Activated CD8-positive, alpha-beta T cell treated with anti-CD3 and anti-CD28 coated beads, Interleukin-2, amount 10 ng/mL, durations not matched to agents 7 days and 5 days (primary cell): ENCODE measurements at regions of chr13 and their contacts with region 1.

Region 1: GRCh38 chr13:94620286-94620896 is 18.7 kb downstream of the GPR180 start:
- DNase-seq: peak; percentile 38
- ATAC-seq: peak; percentile 63
- H3K4me3 Mint-ChIP-seq: no peak overlapping the region
- H3K27ac Mint-ChIP-seq: no peak overlapping the region
- H3K4me1 Mint-ChIP-seq: peaks cover 9% of the 10 kb centered on the region
- H3K27me3 Mint-ChIP-seq: no peaks in the 10 kb centered on the region

Region 2: GRCh38 chr13:94416454-94417080 is 203.8 kb before region 1 on chr13:
- CTCF ChIA-PET with region 1: interaction called, 10 read pairs
- POLR2A ChIA-PET with region 1: no interaction called
- DNase-seq: no peak
- ATAC-seq: no peak
- H3K4me3 Mint-ChIP-seq: no peak overlapping the region
- H3K27ac Mint-ChIP-seq: no peak overlapping the region
- H3K4me1 Mint-ChIP-seq: peaks cover 19% of the 10 kb centered on the region
- H3K27me3 Mint-ChIP-seq: no peaks in the 10 kb centered on the region

Region 3: GRCh38 chr13:94549232-94550061 is 70.9 kb before region 1 on chr13:
- CTCF ChIA-PET with region 1: interaction called, 32 read pairs
- POLR2A ChIA-PET with region 1: interaction called, 3 read pairs
- DNase-seq: peak; percentile 94
- ATAC-seq: peak; percentile 95
- H3K4me3 Mint-ChIP-seq: peak overlapping the region; percentile 86
- H3K27ac Mint-ChIP-seq: peak overlapping the region; percentile 96
- H3K4me1 Mint-ChIP-seq: peaks cover 20% of the 10 kb centered on the region
- H3K27me3 Mint-ChIP-seq: peaks cover 8% of the 10 kb centered on the region

Region 4: DNA sequence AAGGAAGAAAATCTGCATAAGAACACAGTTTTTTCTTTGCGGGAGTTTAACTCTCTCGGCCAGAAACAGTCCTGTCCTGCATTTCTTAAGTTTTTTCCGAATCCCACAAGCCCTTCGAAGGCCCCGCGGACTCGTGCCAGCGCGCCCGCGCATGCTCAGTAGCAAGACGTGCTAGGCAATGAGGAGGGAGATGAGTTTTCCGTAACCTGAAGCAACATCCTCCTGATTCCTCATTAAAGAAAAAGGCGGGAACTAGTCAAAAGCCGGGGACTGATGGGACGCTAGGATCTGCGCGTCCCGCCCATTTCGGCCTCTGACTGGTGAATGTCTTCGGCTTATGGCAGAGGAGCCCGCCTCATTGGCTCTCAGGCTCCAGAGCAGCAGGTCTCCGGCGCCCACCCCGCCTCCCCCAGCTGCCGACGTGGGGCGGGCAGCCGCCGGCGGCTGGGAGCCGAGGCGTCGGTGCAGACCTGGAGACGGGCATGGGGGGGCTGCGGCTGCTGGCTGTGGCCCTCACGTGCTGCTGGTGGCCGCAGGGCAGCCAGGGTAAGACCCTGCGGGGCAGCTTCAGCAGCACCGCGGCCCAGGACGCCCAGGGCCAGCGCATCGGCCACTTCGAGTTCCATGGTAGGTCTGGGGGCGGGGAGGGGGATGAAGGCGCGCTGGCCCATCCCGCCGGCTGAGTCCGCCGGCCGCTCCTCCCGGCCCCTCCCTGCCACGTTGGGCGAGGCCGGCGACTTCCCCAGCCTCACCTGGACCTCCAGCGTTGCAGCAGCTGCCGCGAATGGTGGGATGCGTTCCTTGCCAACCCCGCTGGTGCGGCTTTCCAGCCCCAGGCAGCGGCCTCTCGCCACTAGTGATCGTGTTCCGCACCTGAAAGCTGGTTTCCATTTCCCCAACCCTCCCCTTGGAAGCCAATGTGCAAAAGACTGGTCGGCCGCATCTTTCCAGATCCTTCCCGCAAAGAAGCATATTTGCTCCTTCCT is 18.7 kb before region 1 on chr13 and contains the start of gene GPR180:
- CTCF ChIA-PET with region 1: interaction called, 32 read pairs
- POLR2A ChIA-PET with region 1: interaction called, 5 read pairs
- DNase-seq: peak; percentile 96
- ATAC-seq: peak; percentile 100
- H3K4me3 Mint-ChIP-seq: peak within 1 kb of the TSS; percentile 87
- H3K27ac Mint-ChIP-seq: peak within 1 kb of the TSS; percentile 83
- H3K4me1 Mint-ChIP-seq: peaks cover 46% of the 10 kb centered on the region
- H3K27me3 Mint-ChIP-seq: no peaks in the 10 kb centered on the region
- total RNA-seq, gene GPR180: 7.7 to 7.9 TPM

Region 5: GRCh38 chr13:94630858-94631257 is 10.5 kb after region 1 on chr13:
- CTCF ChIA-PET with region 1: interaction called, 48 read pairs
- POLR2A ChIA-PET with region 1: no interaction called
- DNase-seq: no peak
- ATAC-seq: no peak
- H3K4me3 Mint-ChIP-seq: no peak overlapping the region
- H3K27ac Mint-ChIP-seq: no peak overlapping the region
- H3K4me1 Mint-ChIP-seq: no peaks in the 10 kb centered on the region
- H3K27me3 Mint-ChIP-seq: no peaks in the 10 kb centered on the region

Region 6: DNA sequence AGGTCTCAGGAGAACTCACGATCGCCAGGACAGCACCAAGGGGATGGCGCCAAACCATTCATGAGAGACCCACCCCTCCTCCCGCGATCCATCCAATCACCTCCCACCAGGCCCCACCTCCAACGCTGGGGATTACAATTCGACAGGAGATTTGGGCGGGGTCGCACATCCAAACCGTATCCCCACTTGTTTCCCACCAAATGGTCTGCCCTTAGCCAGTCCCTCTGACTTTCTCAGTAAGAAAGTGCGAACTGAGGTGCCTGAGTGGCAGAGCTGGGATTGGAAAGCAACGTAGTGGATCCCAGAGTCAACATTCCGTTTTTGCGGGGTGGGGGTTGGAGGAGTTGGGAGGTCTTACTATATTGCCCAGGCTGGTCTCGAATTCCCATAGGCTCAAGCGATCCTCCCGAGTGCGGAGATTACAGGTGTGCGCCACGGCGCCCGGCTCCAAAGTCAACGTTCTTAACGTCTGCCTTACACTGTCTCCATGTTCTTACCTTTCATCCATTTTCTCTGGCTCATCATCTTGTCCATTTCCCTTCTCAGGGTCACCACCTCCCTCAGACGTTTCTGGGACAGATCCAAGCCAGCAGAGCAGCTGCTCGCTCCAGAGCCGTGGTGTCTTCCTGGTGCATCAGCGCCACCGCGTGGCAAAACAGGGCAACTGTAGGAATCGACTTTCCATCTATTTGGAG is 783.6 kb after region 1 on chr13:
- CTCF ChIA-PET with region 1: interaction called, 12 read pairs
- POLR2A ChIA-PET with region 1: no interaction called
- DNase-seq: peak; percentile 79
- ATAC-seq: peak; percentile 92
- H3K4me3 Mint-ChIP-seq: peak overlapping the region; percentile 85
- H3K27ac Mint-ChIP-seq: peak overlapping the region; percentile 76
- H3K4me1 Mint-ChIP-seq: peaks cover 12% of the 10 kb centered on the region
- H3K27me3 Mint-ChIP-seq: peaks cover 7% of the 10 kb centered on the region